ENCODE measurements at regions of chr17 and their contacts with region 1.

Region 1: DNA sequence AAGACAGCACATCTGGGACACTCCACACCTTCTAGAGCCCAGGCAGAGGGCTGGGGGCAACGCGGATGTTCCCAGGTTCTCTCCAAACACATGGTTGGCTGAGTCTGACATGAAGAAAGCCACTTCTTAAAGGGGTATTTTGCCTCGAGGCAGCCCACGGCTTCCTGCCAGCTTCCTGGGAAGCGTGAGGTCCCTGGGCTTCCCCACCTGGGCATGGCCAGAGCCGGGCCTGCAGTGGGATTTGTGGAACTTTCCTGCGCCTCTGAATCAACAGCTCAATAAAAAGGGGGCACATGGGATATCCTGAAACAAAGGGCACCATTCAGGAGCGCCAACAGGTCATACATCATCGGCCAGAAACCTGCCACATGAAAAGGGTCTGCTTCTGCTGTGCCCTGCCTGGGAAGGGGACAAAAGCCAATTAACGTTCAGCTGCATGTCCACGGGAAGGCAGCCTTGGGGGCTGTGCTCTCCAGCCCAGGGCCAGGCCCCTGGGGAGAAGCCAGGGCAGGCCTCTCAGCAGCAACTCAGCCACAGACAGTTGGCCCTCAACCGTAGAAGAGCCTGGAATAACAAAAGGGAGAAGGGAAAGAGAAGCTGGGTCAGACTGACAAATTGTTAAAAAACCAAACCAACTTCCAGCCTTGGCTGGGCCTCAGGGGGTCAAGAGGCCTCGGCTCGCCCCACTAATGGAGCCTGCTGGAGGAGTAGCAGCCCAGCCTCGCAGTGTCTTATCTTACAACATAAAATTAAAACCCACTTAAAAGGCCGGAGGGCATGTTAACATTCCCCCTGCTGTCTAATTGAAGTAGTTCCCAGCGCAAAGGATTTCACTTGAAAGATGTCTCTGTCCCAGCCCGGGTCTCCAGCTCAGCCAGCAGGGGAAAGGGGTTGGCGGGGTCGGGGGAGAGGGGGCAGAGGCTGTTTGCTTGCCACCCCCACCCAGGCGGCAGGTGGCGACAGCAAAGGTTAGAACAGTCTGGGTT is 34.2 kb downstream of the TBX4 start:
- DNase-seq: no peak
- H3K4me3 ChIP-seq: no peak overlapping the region
- H3K27ac ChIP-seq: no peak overlapping the region
- H3K4me1 ChIP-seq: peaks cover 0 to 7% (median 0%) of the 10 kb centered on the region in 4 donors
- H3K27me3 ChIP-seq: peaks cover 0 to 5% (median 0%) of the 10 kb centered on the region in 4 donors
- CTCF ChIP-seq: no peak
- EP300 ChIP-seq: no peak
- POLR2A ChIP-seq: no peak

Region 2: GRCh38 chr17:61426013-61426730 is 60.3 kb before region 1 on chr17:
- intact Hi-C with region 1: loop called (anchors 10 kb)
- DNase-seq: peak; percentile 89
- H3K4me3 ChIP-seq: no peak overlapping the region
- H3K27ac ChIP-seq: no peak overlapping the region
- H3K4me1 ChIP-seq: no peaks in the 10 kb centered on the region
- H3K27me3 ChIP-seq: peaks cover 0 to 42% (median 12%) of the 10 kb centered on the region in 4 donors
- CTCF ChIP-seq: no peak
- EP300 ChIP-seq: no peak
- POLR2A ChIP-seq: no peak

Region 3: DNA sequence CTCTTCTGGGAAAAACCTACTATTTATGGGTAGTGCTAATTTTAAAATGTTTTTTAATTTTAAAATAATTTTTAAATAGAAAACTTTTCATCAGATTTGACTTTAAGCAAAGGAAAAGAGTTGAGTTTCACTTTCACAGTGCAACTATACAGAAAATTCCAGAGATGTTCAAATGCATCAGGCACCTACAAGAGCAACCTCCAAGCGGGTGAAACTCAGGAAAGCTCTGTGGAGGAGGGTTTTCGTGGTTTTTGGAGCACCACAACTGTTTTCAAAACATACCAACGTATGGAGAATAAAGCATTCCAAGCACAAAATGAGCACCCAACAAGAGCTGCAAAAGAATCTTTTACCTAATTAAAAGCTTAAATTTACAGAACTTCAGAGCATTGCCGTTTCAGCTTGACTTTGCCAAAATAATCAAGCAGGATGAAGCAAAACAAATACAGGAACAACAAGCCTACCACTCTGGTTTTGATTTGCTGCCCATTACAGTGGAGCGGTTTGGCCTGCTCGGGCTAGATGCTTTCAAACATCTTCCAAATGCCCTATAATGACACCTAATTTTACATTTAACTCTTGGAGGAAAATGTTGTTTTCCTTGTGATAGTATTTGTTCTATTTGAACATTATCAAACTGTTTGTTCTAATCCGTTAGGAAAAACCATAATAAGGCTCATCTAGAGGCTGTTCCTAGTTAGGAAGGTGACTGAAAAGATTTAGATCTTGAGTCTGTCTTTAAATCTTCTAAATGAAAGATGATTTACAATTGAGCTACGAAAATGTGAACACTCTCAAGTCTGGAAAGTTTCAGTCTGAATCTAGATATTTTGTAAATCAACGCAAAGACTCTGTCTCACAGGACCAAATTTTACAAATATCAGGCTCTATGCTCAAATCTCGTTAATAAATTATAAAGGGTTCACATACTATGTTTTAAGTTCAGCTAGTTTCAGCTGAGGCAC is 70.1 kb after region 1 on chr17:
- intact Hi-C with region 1: no loop called
- DNase-seq: no peak
- H3K4me3 ChIP-seq: no peak overlapping the region
- H3K27ac ChIP-seq: no peak overlapping the region
- H3K4me1 ChIP-seq: no peaks in the 10 kb centered on the region
- H3K27me3 ChIP-seq: peaks cover 0 to 14% (median 0%) of the 10 kb centered on the region in 4 donors
- CTCF ChIP-seq: no peak
- EP300 ChIP-seq: no peak
- POLR2A ChIP-seq: no peak

Measured in esophagus muscularis mucosa (tissue), 4 donors.